Sigmoid colon (tissue), 7 donors: ENCODE measurements at regions of chr6 and their contacts with region 1.

Region 1: GRCh38 chr6:136249811-136250685 is at the start of gene MTFR2:
- DNase-seq: peak; percentile 98
- H3K4me3 ChIP-seq: peak within 1 kb of the TSS; percentile 50 to 72 (median 63)
- H3K27ac ChIP-seq: peak within 1 kb of the TSS; percentile 34 to 73 (median 48)
- H3K4me1 ChIP-seq: peaks cover 0 to 21% (median 16%) of the 10 kb centered on the region in 4 donors
- H3K27me3 ChIP-seq: no peaks in the 10 kb centered on the region
- CTCF ChIP-seq: no peak
- EP300 ChIP-seq: no peak
- POLR2A ChIP-seq: no peak
- total RNA-seq, gene MTFR2: 0.36 to 1.6 TPM in 2 of 4 donors, not detected in the others

Region 2: DNA sequence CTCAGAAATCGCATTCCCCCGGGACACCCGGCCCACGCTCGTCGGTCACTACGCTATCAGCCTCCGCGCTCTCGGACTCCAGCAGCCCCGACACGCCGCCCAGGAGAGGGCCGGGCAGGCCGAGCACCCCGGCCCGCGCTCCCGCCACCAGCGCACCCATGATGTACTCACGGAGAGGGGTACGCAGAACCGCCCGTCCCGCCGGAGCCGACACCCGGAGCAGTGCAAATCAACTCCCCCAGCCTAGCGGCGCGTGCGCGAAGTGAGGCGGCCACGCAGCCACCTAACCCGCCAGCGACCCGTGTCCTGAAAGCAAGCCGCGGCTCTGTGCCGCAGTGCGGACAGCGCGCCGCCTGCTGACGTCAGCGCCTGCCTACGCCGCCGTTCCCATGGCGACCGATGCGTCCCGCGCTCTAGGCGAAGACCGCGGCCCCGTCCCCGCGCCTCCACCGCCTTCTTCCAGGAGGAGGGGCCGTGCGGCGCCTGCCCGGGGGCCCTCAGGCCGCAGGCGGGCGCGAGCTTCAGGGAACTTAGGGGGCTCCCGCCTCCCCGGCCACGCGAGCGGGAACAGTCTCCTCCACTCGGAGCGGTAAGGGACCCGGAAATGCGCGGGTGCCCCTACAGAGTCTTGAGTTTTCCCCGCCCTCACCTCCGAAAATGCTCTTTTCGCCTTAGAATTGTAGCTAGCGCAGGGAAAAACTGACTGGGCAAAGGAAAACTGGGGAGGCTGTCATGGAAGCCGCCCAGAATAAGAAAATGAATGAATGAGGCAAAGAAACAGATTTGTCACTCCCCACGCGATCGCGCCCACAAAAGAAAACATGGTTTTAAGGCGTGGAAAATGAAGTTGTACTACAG is 752.4 kb before region 1 on chr6 and contains the start of gene AHI1:
- intact Hi-C with region 1: loop called (anchors 2 kb)
- DNase-seq: peak; percentile 97
- H3K4me3 ChIP-seq: peak within 1 kb of the TSS; percentile 76 to 93 (median 78)
- H3K27ac ChIP-seq: peak within 1 kb of the TSS; percentile 94 to 97 (median 96)
- H3K4me1 ChIP-seq: peaks cover 0 to 25% (median 13%) of the 10 kb centered on the region in 4 donors
- H3K27me3 ChIP-seq: no peaks in the 10 kb centered on the region
- CTCF ChIP-seq: peak in 1 of 4 experiments; percentile 29
- EP300 ChIP-seq: no peak
- POLR2A ChIP-seq: peak; percentile 75 to 85
- total RNA-seq, gene AHI1: 25.8 to 47.1 (median 31.6) TPM

Region 3: DNA sequence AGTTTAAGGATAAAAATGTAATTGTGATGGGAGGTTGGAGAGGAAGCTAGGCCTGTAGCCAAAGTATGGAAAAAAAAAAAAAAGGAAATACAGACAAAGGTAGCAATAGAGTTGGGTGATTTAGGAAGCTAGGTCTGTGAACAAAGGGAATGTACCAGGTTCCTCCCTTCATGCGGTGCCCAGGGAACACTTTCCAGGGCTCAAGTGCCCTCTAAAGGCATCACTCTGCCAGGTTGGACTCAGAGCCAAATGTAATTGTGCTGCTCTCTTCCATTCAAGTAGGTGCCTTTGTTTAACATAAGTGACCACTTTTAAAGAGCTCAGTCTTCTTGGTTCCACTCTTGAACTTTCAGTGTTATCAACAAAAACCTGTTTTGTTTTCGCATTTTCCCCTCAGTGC is 592.8 kb before region 1 on chr6:
- intact Hi-C with region 1: no loop called
- DNase-seq: no peak
- H3K4me3 ChIP-seq: no peak overlapping the region
- H3K27ac ChIP-seq: no peak overlapping the region
- H3K4me1 ChIP-seq: no peaks in the 10 kb centered on the region
- H3K27me3 ChIP-seq: no peaks in the 10 kb centered on the region
- CTCF ChIP-seq: no peak
- EP300 ChIP-seq: no peak
- POLR2A ChIP-seq: no peak

Region 4: GRCh38 chr6:136289579-136290409 is 39.7 kb after region 1 on chr6 and contains the start of gene BCLAF1:
- intact Hi-C with region 1: loop called (anchors 2 kb)
- DNase-seq: peak; percentile 100
- H3K4me3 ChIP-seq: peak within 1 kb of the TSS; percentile 78 to 99 (median 80)
- H3K27ac ChIP-seq: peak within 1 kb of the TSS; percentile 97 to 100 (median 98)
- H3K4me1 ChIP-seq: peaks cover 0 to 50% (median 46%) of the 10 kb centered on the region in 4 donors
- H3K27me3 ChIP-seq: no peaks in the 10 kb centered on the region
- CTCF ChIP-seq: no peak
- EP300 ChIP-seq: peak in 2 of 4 donors; percentile 23 to 90
- POLR2A ChIP-seq: peak; percentile 97 to 98
- total RNA-seq, gene BCLAF1: 78.0 to 139 (median 91.2) TPM

Region 5: DNA sequence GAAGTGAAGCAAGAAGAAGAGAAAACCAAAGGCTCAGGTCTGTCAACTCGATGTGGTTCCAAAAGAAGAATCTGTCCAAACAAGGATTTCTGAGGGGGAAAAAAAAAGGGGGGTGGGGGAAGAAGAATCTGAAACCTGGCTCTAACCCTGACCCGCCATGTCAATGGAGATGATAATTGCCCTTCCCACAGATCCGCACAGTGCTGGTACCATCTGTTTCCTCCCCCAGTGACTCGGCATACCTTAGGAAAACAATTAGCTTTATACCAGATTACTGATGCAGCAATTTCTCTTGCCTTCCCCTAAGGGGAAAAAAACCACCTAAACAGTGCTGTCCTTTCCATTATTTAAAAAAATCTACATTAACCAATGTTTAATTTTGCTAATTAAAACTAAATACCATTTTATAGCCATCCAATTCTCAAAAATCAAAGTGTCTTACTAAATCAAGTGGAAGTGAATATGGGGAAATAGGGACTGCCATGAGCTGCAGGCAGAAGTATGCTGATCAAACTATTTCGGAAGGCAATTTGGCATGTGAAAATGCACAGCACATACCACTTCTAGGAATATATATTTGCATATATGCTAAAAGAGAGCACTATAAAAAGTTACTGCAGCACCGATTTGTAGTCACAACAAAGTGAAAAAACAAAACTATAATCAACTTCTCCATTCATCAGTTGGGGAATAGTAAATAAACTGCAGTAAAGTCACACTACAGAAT is 253.4 kb after region 1 on chr6:
- intact Hi-C with region 1: no loop called
- DNase-seq: no peak
- H3K4me3 ChIP-seq: no peak overlapping the region
- H3K27ac ChIP-seq: no peak overlapping the region
- H3K4me1 ChIP-seq: no peaks in the 10 kb centered on the region
- H3K27me3 ChIP-seq: no peaks in the 10 kb centered on the region
- CTCF ChIP-seq: no peak
- EP300 ChIP-seq: no peak
- POLR2A ChIP-seq: no peak